Panc1 (cell line): ENCODE measurements at regions of chr17 and their contacts with region 1.

Region 1: DNA sequence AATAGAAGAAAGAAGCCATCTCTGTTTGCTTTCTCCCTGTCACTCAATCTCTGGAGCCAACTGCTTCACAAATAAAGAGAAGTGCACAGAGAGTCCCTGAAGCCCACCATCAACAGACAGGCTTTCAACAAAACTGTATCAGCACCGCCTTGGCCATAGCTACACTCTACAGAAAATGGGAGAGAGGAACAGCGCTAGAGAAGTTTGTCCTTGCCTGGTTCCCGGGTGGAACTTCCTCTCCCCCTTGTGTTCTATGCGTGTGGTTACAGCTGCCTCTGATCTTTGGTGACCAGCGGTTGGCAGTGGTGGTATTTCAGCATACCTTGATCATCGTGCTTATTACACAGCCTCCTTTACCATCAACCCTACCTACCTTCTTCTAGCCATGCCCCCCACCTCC is 91.4 kb upstream of the CCL2 start:
- DNase-seq: no peak
- ATAC-seq: peak; percentile 95
- H3K4me3 ChIP-seq: no peak overlapping the region
- H3K27ac ChIP-seq: no peak overlapping the region
- H3K4me1 ChIP-seq: no peaks in the 10 kb centered on the region
- H3K27me3 ChIP-seq: peaks cover 13% of the 10 kb centered on the region
- CTCF ChIP-seq: peak; percentile 70

Region 2: GRCh38 chr17:33779225-33779591 is 384.4 kb before region 1 on chr17:
- CTCF ChIA-PET with region 1: interaction called, 5 read pairs
- POLR2A ChIA-PET with region 1: no interaction called
- in situ Hi-C with region 1: no loop called
- intact Hi-C with region 1: loop called (anchors 5 kb)
- DNase-seq: peak; percentile 38
- ATAC-seq: peak; percentile 78
- H3K4me3 ChIP-seq: no peak overlapping the region
- H3K27ac ChIP-seq: no peak overlapping the region
- H3K4me1 ChIP-seq: no peaks in the 10 kb centered on the region
- H3K27me3 ChIP-seq: peaks cover 14% of the 10 kb centered on the region
- CTCF ChIP-seq: peak; percentile 90

Region 3: GRCh38 chr17:34113089-34113488 is 50.6 kb before region 1 on chr17:
- CTCF ChIA-PET with region 1: no interaction called
- POLR2A ChIA-PET with region 1: no interaction called
- in situ Hi-C with region 1: no loop called
- intact Hi-C with region 1: no loop called
- DNase-seq: no peak
- ATAC-seq: no peak
- H3K4me3 ChIP-seq: no peak overlapping the region
- H3K27ac ChIP-seq: no peak overlapping the region
- H3K4me1 ChIP-seq: no peaks in the 10 kb centered on the region
- H3K27me3 ChIP-seq: peaks cover 8% of the 10 kb centered on the region; the same call in 1 of the 2 replicates
- CTCF ChIP-seq: no peak